ENCODE measurements at regions of chr10 and their contacts with region 1.

Region 1: DNA sequence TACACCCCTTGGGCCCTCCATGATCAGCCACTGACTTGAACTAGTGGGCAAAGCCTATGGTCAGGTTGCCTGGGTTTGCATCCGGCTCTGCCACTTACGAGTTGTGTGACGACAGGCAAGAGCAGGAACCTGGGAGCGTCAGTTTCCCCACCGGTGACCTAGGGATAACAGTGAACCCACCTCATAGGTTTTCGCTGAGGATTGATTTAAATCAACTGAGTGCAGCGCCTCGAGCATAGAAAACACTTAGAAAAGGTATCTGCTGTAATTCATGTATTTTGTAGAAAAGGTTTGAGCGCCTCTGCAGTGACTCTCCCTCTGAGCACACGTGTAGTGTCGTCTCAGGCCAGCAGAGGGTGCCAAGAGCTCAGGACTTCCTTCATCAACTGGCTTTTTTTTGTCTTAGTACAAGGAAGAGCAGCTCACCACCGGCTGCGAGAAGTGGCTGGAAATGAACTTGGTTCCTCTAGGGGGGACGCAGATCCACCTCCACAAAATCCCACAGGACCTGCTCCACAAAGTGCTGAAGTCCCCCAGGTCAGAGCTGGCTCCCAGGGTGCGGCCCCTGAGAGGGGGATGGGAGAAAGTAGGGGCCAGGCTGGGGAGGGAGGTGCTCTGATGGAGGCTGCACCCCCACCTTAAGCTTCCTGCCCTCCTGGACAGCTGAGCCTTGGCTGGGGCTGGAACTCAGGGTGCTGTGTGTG is 27.7 kb downstream of the BTBD16 start:
- DNase-seq: peak; percentile 80
- ATAC-seq: peak; percentile 90

Region 2: GRCh38 chr10:122342293-122343134 is 43.8 kb after region 1 on chr10:
- intact Hi-C with region 1: loop called (anchors 5 kb)
- DNase-seq: no peak
- ATAC-seq: peak; percentile 42

Region 3: GRCh38 chr10:122475100-122475499 is 176.3 kb after region 1 on chr10:
- intact Hi-C with region 1: no loop called
- DNase-seq: peak; percentile 90
- ATAC-seq: peak; percentile 96

Region 4: DNA sequence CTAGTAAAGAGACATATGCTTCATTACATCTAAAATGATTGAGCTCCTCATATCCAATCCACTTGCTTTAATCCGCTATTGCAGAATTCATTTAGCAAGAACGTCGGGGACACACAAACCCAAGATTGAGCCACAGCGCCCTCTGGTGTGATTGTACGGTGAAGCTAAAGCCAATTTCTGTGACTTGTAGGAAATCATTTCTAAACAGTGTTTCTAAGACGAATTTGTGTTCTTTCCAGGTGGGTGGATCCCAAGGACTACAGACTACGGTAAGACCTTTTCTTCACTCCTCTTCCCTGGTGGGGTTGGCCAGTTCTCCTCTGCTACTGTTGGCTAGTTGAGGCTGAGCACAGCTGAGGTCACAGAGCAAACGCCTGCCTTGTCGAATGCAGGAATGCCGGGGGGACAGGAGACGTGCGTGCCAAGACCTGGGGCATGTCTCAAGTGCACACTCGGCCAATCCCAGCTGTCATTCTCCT is 267.0 kb after region 1 on chr10:
- intact Hi-C with region 1: loop called (anchors 10 kb)
- DNase-seq: peak; percentile 85
- ATAC-seq: peak; percentile 74